ENCODE measurements at regions of chr4 and their contacts with region 1.

Region 1: DNA sequence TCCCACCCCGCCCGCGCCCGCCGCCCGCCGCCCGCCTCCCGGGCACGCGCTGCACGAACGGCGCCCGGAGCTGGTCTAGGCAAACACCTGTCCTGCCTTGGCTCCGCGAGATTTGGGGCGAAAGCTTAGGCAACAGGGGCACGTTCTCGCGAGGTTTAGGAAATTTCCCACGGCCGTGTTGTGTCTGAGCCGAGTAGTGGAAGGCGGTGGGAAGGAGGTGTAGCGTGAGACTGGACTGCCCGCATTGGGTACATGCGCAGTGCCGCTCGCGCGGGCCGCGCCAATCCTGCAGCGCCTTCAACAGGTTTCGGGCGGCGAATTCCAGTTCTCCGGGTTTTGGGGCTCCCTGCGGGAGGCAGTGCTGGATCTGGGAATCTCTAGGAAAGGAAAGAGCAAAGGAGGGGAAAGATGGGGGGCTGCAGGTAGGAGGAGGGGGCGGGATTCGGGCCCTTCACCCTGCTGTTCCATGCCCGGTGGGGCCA is 1.3 kb upstream of the RBPJ start:
- DNase-seq: peak; percentile 89 to 99 (median 94)
- ATAC-seq: peak; percentile 77 to 82 (median 80)
- H3K4me3 ChIP-seq: peak overlapping the region; percentile 86 to 99
- H3K4me3 Mint-ChIP-seq: peak overlapping the region; percentile 91 to 99 (median 99)
- H3K27ac ChIP-seq: peak overlapping the region; percentile 93
- H3K27ac Mint-ChIP-seq: peak overlapping the region; percentile 99 to 100
- H3K4me1 ChIP-seq: peaks cover 17 to 27% of the 10 kb centered on the region in 2 experiments
- H3K4me1 Mint-ChIP-seq: peaks cover 25 to 44% (median 39%) of the 10 kb centered on the region in 3 donors
- H3K27me3 ChIP-seq: no peaks in the 10 kb centered on the region
- H3K27me3 Mint-ChIP-seq: peaks cover 0 to under 1% of the 10 kb centered on the region in 2 donors

Region 2: GRCh38 chr4:26191353-26191752 is 128.2 kb before region 1 on chr4:
- CTCF ChIA-PET with region 1: no interaction called
- POLR2A ChIA-PET with region 1: interaction called in 1 of 2 experiments, 11 read pairs
- DNase-seq: no peak
- ATAC-seq: no peak
- H3K4me3 ChIP-seq: no peak overlapping the region
- H3K4me3 Mint-ChIP-seq: no peak overlapping the region
- H3K27ac ChIP-seq: no peak overlapping the region
- H3K27ac Mint-ChIP-seq: peak overlapping the region in 1 of 2 donors; percentile 29
- H3K4me1 ChIP-seq: peaks cover 0 to 7% of the 10 kb centered on the region in 2 experiments
- H3K4me1 Mint-ChIP-seq: peaks cover 8 to 29% (median 24%) of the 10 kb centered on the region in 3 donors
- H3K27me3 ChIP-seq: no peaks in the 10 kb centered on the region
- H3K27me3 Mint-ChIP-seq: no peaks in the 10 kb centered on the region

Region 3: DNA sequence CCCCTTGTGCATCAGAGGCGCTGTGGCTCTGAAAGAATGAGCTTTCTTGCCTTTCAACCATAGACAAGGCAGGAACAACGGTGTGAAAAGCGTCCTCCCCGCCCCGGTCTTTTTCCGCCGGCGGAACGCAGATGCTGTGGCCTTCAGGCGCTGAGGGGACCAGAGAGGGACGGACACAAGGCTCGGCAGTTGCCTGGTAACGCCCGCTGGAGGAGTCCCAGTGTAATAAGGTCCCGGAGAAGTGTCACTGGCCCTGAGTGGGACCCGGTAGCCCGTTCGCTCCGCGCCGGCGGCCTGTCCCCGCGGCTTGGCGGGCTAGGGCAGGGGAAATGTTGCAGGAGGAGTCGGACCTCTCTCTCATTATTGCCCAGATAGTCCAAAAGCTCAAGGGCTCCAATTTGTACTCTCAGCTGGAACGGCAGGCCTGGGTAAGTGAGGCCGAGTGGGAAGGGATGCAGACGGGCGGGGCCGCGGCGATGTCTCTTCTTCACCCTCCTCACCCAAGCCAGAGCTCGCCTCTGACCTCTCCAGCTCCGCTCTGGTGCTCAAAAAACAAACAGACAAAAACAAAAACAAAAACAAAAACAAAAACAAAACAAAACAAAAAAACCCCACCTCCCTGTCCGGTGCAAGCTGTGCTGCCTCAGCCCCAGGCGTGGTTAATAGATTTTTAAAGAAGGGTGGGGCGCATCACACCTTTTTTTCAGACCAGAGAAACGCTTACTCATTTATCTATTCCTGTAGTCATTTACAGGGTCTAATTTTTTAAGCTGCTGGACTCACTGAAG is 264.6 kb after region 1 on chr4 and contains the start of gene TBC1D19:
- CTCF ChIA-PET with region 1: no interaction called
- POLR2A ChIA-PET with region 1: interaction called in 1 of 2 experiments, 14 read pairs
- DNase-seq: peak; percentile 73 to 91 (median 82)
- ATAC-seq: peak; percentile 88 to 95 (median 94)
- H3K4me3 ChIP-seq: peak within 1 kb of the TSS; percentile 91 to 98
- H3K4me3 Mint-ChIP-seq: peak within 1 kb of the TSS; percentile 95 to 96 (median 96)
- H3K27ac ChIP-seq: peak within 1 kb of the TSS; percentile 94
- H3K27ac Mint-ChIP-seq: peak within 1 kb of the TSS; percentile 94 to 98
- H3K4me1 ChIP-seq: peaks cover 9 to 12% of the 10 kb centered on the region in 2 experiments
- H3K4me1 Mint-ChIP-seq: peaks cover 33 to 42% (median 34%) of the 10 kb centered on the region in 3 donors
- H3K27me3 ChIP-seq: no peaks in the 10 kb centered on the region
- H3K27me3 Mint-ChIP-seq: peaks cover 0 to 7% of the 10 kb centered on the region in 2 donors
- total RNA-seq, gene TBC1D19: 6.8 to 11.6 (median 9.4) TPM

Measured in T-cell (primary cell).